Right ventricle myocardium inferior (tissue), 1 donor: ENCODE measurements at regions of chr1 and their contacts with region 1.

Region 1: DNA sequence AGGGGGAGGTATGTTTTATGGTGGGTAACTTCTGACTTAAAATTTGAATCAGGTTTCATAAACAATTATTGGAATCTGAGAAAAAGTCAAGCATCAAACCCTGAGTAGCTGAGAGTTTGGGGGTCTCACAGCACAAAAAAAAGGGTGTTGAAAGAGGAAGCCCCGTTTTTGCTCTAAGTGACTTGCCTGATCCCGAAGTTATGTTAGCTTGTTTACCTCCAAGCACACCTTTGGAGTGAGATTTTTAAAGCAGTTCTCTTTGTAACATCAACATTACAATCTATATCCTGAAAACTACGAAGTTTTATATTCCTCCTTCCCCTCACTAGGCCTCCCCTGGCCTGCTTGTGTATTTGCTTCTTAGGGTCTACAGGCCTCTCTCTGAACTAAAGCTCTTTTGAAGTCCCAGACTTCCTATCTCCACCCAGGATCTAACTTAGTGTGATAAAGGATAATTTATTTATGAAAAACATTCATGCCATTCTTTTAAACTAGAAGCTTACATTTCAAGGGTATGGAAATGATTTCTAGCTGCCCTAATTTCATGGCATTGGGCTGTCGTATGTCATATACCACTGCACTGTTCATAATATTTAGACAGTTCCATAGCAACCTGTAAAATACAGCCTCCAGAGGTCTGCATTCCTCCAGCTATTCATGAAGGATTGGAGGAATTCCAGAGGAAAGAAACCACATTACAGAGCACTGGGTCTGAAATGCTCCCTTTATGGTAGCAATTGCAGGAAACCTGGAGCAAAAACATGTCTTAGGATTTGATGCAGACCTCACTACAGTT is 36.1 kb upstream of the RGS1 start:
- DNase-seq: no peak
- ATAC-seq: peak; percentile 88

Region 2: GRCh38 chr1:192489748-192490147 is 49.7 kb before region 1 on chr1:
- intact Hi-C with region 1: loop called (anchors 5 kb)
- DNase-seq: peak; percentile 74
- ATAC-seq: peak; percentile 89